GM10248 (cell line): ENCODE measurements at regions of chr10 and their contacts with region 1.

Region 1: DNA sequence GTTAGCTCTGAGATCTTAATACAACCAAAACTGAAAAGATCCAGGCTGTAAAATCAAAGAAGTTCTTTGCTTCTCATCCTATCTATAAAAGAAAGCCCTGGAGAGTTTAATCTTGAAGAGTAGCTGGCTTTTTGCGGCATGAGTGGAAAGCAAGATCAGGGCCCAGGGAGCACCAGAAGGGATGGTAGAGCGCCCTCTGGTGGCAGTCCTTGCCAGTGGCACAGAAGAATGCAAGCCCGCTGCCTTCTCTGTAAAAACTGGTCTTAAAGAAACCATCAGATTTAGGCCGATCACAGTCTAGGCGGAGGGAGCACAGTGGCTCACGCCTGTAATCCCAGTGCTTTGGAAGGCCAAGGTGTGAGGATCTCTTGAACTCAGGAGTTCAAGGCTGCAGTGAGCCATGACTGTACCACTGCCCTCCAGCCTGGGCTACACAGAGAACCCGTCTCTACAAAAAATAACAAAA is 35.6 kb downstream of the CPN1 start:
- DNase-seq: peak; percentile 73
- CTCF ChIP-seq: peak; percentile 87

Region 2: DNA sequence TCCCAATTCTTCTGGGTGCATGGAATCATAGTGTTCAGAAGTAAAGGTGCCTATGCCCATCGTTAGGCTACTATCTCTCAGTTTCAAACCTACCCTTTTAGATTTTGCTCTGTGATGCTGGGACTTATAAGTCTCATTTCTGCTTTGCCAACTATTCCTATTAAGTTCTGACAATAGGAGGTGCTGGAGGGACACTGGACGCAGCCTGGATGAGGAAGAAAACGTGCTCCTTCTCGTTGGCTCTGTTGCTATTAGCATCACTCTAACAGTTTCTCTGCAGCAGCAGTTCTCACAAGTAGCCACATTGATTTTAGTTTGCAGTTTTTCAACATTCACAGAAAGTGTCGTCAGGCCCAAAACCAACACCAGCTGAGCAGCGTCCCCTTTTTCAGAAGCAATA is 191.2 kb before region 1 on chr10:
- CTCF ChIA-PET with region 1: interaction called, 231 read pairs
- POLR2A ChIA-PET with region 1: no interaction called
- DNase-seq: no peak
- CTCF ChIP-seq: no peak

Region 3: DNA sequence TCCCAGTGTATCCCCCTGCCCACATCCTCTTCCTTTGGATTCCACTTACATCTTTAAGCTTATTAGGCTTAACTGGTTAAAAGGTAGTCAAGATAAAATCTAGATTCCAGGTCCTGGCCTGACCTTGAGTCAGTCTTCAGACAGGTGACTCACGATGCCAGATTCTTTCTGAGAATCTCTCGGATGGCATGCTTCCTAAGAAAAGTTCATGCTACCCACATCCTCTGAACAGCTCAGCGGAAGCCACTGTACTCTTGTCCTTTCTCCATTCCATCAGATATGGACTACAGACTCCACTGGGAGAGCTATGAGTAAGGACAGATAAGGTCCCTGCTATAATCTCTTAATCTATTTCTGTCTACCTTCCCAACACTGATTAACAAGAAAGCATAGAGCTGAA is 79.7 kb before region 1 on chr10:
- CTCF ChIA-PET with region 1: interaction called, 12 read pairs
- POLR2A ChIA-PET with region 1: no interaction called
- DNase-seq: no peak
- CTCF ChIP-seq: no peak

Region 4: DNA sequence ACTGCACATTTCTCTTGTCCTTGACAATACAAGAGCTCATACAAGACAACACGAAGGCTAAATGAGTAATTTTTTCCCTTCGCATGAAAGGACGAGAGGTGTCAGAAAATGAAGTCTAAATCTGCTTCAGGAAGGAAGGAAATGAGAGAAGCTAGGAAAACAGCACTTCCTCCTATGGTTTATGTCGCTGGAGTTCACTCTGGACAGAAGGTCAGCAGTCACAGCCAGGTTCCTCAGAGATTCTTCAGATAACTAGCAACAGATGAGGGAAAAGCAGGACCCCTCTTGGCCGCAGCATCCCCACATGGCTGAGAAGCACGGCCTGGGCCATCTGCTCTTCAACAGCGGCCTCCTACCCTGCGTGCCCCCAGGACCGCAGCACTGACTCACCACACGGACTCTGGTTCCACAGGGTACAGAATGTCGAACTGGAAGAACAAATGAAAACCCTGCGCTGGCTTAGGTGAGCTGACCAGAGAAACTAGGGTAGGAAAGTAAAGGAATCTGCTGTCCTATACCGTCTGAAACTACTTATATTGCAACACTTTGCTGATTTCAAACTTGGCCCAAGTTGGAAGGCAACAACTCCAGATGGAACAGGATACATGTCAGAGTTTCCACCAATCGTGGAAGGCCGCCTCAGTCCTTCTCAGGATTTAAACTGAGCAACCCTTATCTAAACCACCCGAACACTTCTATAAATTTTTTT is 62.6 kb before region 1 on chr10:
- CTCF ChIA-PET with region 1: interaction called, 17 read pairs
- POLR2A ChIA-PET with region 1: no interaction called
- DNase-seq: no peak
- CTCF ChIP-seq: no peak

Region 5: GRCh38 chr10:100009793-100010676 is 36.0 kb before region 1 on chr10 and contains the start of gene DNMBP:
- CTCF ChIA-PET with region 1: interaction called, 137 read pairs
- POLR2A ChIA-PET with region 1: no interaction called
- DNase-seq: peak; percentile 92
- CTCF ChIP-seq: peak; percentile 89

Region 6: GRCh38 chr10:100025576-100025975 is 20.5 kb before region 1 on chr10:
- CTCF ChIA-PET with region 1: interaction called, 34 read pairs
- POLR2A ChIA-PET with region 1: no interaction called
- DNase-seq: no peak
- CTCF ChIP-seq: no peak